Mammary epithelial cell (primary cell): ENCODE measurements at regions of chr10 and their contacts with region 1.

Region 1: DNA sequence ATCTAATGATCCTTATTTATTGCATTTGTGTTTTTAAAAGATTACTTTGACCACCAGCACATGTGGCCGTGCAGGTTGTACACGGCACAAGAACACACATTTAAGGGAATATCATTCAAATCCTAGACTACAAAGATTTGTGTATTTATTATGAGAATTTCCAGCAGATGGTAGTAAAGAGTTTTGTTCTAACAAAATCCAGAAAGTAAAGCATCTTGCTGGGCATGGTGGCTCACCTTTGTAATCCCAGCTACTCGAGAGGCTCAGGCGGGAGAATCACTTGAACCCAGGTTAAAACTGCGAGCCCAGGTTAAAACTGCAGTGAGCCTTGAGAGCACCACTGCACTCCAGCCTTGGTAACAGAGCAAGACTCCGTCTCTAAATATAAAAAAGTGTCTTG is 31.5 kb downstream of the MACROH2A2 start:
- DNase-seq: no peak
- H3K4me3 ChIP-seq: no peak overlapping the region
- H3K27ac ChIP-seq: no peak overlapping the region
- H3K4me1 ChIP-seq: no peaks in the 10 kb centered on the region
- H3K27me3 ChIP-seq: no peaks in the 10 kb centered on the region
- CTCF ChIP-seq: no peak

Region 2: DNA sequence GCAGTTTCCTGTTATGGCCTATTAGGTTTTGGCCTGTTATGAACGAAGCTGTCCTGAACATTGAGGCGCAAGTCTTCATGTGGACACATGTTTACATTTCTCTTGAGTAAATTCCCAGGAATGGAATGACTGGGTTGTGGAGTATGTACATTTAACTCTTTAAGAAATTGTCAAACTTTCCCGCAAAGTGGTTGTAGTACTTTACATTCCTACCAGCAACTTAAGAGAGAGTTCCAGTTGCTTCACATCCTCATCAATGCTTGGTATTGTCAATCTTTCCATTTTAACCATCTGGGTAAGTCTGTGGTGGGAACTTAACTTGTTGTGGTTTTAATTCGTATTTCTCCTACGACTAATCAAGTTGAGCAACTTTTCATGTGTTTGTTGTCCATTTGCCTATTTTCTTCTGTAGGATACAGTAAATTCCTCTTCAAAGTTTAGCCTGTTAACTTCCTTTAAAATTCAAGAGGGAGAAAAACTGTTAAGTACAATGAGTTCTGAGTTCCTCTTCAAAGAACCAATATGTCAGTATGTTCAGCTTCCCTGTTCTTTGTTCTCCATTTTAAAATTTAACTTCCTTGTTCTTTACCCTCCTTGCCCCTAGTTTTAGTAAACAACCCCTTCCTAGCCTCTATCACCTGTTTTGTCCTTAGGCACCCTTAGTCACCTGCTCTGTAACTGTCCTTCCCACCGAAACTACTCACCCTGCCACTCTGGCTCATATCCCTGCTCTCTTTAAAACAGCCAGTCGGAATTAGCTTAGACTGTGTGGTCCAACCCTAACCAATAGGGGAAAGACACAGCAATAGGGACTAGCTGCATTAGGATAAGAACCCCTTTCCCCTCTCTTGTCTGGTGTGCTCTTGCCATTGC is 380.2 kb before region 1 on chr10:
- CTCF ChIA-PET with region 1: no interaction called
- dilution Hi-C with region 1: no loop called
- in situ Hi-C with region 1: no loop called
- intact Hi-C with region 1: no loop called
- DNase-seq: peak; percentile 98
- H3K4me3 ChIP-seq: no peak overlapping the region
- H3K27ac ChIP-seq: peak overlapping the region; percentile 81
- H3K4me1 ChIP-seq: peaks cover 22% of the 10 kb centered on the region
- H3K27me3 ChIP-seq: peaks cover 4% of the 10 kb centered on the region
- CTCF ChIP-seq: peak in 1 of 2 donors; percentile 10

Region 3: GRCh38 chr10:70048030-70048723 is 36.0 kb before region 1 on chr10:
- CTCF ChIA-PET with region 1: no interaction called
- dilution Hi-C with region 1: no loop called
- in situ Hi-C with region 1: no loop called
- intact Hi-C with region 1: no loop called
- DNase-seq: no peak
- H3K4me3 ChIP-seq: no peak overlapping the region
- H3K27ac ChIP-seq: no peak overlapping the region
- H3K4me1 ChIP-seq: no peaks in the 10 kb centered on the region
- H3K27me3 ChIP-seq: no peaks in the 10 kb centered on the region
- CTCF ChIP-seq: no peak

Region 4: GRCh38 chr10:70060389-70060788 is 23.8 kb before region 1 on chr10:
- CTCF ChIA-PET with region 1: no interaction called
- dilution Hi-C with region 1: no loop called
- in situ Hi-C with region 1: no loop called
- intact Hi-C with region 1: no loop called
- DNase-seq: no peak
- H3K4me3 ChIP-seq: no peak overlapping the region
- H3K27ac ChIP-seq: no peak overlapping the region
- H3K4me1 ChIP-seq: no peaks in the 10 kb centered on the region
- H3K27me3 ChIP-seq: no peaks in the 10 kb centered on the region
- CTCF ChIP-seq: no peak

Region 5: DNA sequence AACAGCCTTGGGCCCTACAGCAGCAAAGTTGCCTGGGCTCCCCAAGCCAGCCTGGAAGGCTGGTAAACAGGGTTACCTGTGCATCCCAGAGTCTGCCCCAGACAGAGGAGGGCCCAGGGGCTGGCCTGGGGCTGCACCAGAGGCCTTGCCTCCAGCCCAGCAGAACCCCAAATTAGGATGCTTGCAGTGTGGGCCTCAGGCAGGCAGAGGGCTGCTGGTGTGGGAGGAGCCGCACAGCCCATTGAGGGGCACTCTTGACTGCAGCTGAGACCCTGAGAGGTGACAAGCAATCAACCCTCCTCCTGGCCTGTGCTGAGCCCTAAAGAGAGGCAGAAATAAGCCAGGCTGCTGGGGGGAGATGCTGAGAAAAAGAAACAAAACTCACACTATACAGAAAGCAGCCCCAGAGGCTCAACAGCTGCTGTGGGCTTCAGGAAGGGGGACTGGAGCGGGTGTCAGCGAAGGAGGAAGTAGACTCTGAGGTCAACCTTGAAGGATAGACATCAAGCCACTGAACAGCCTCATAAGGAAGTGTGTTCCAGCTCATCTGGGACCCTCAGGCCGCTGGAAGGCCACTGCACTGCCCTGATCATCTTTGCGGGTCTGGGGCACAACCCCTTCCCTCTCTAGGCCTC is 41.8 kb after region 1 on chr10:
- CTCF ChIA-PET with region 1: interaction called, 15 read pairs
- dilution Hi-C with region 1: no loop called
- in situ Hi-C with region 1: no loop called
- intact Hi-C with region 1: no loop called
- DNase-seq: no peak
- H3K4me3 ChIP-seq: no peak overlapping the region
- H3K27ac ChIP-seq: no peak overlapping the region
- H3K4me1 ChIP-seq: peaks cover 3% of the 10 kb centered on the region
- H3K27me3 ChIP-seq: no peaks in the 10 kb centered on the region
- CTCF ChIP-seq: no peak